GM12878 (cell line): ENCODE measurements at regions of chr5 and their contacts with region 1.

Region 1: DNA sequence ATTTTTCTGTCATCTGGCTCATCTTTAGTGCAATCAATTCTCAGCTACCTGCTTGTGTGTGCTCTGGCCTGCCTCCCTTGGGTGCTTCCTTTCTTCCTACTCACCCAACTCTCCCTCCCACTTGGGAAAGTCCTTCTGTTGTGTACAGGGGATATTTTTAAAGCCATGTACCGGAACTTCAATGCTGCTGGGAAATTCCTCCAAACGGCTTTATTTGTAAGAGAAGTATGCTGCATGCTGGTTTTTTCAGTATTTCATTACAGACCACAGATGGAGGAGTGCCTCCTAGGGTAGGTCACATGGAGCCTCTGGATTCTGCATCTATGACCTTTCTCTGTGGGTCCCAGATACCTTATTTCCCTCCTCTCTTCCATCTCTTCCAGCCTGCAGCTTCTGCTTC is 5.4 kb upstream of the HMHB1 start:
- DNase-seq: peak; percentile 60
- ATAC-seq: peak; percentile 90
- H3K4me3 ChIP-seq: peak overlapping the region; percentile 66
- H3K27ac ChIP-seq: peak overlapping the region; percentile 34; the same call in 1 of the 2 replicates
- H3K4me1 ChIP-seq: peaks cover 3% of the 10 kb centered on the region; the same call in 1 of the 2 replicates
- H3K27me3 ChIP-seq: no peaks in the 10 kb centered on the region
- CTCF ChIP-seq: no peak
- EP300 ChIP-seq: peak in 1 of 2 experiments; percentile 42; a peak in 1 of 4 replicates
- POLR2A ChIP-seq: no peak
- RAD21 ChIP-seq: peak; percentile 25; the same call in 1 of the 2 replicates

Region 2: DNA sequence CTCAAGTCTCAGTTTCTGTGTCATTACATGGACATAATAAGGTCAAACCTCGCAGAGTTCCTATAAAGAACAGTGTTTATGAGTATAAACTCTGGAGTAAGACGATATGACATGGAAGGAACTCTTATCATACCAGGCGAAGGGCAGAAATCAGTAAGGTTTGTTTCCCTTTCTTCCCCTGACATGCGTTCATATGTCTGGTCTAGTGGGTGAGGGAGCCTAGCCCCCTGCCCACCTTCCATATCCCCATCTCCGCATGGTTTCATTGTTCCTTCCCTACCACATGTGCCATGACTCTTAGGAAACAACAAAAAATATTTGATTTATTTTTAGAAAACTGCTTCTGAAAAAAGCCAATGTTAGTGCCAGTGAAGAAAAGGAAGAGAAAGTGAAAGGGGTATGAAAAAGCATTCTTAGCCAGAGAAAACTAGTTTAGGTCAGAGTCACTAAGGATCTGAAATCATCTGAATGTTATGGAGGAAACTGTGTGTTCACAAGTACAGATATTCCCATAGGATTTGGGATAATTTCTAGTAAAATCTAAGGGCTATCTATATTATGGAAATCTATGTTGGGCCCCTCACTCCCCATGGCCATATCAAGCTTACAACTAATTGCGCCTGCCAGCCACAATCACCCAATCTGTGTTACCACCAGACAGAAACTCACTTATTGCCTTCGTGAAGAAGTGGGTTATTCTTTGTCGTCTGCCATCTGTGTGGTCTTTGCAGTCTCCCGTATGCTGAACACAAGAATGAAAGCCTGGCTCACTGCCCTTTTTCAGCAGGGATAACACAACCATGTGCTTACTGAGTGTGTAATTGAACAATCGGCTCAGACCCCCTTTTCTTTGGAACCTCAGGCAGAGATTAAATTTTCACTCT is 14.5 kb before region 1 on chr5:
- CTCF ChIA-PET with region 1: interaction called, 11 read pairs
- POLR2A ChIA-PET with region 1: interaction called, 4 read pairs
- RAD21 ChIA-PET with region 1: interaction called, 6 read pairs
- SMC1A ChIA-PET with region 1: interaction called, 13 read pairs
- in situ Hi-C with region 1: no loop called
- intact Hi-C with region 1: no loop called
- DNase-seq: no peak
- ATAC-seq: peak; percentile 84
- H3K4me3 ChIP-seq: no peak overlapping the region
- H3K27ac ChIP-seq: peak overlapping the region; percentile 62
- H3K4me1 ChIP-seq: no peaks in the 10 kb centered on the region; the same call in 1 of the 2 replicates
- H3K27me3 ChIP-seq: no peaks in the 10 kb centered on the region
- CTCF ChIP-seq: no peak
- EP300 ChIP-seq: no peak
- POLR2A ChIP-seq: no peak
- RAD21 ChIP-seq: no peak

Region 3: GRCh38 chr5:143860213-143860612 is 53.6 kb after region 1 on chr5:
- CTCF ChIA-PET with region 1: no interaction called
- POLR2A ChIA-PET with region 1: no interaction called
- RAD21 ChIA-PET with region 1: no interaction called
- SMC1A ChIA-PET with region 1: no interaction called
- in situ Hi-C with region 1: no loop called
- intact Hi-C with region 1: no loop called
- DNase-seq: no peak
- ATAC-seq: peak; percentile 33; the same call in 1 of the 3 replicates
- H3K4me3 ChIP-seq: no peak overlapping the region
- H3K27ac ChIP-seq: no peak overlapping the region
- H3K4me1 ChIP-seq: no peaks in the 10 kb centered on the region
- H3K27me3 ChIP-seq: no peaks in the 10 kb centered on the region
- CTCF ChIP-seq: peak in 1 of 3 experiments; percentile 28; a peak in 1 of 6 replicates
- EP300 ChIP-seq: no peak
- POLR2A ChIP-seq: no peak
- RAD21 ChIP-seq: no peak

Region 4: DNA sequence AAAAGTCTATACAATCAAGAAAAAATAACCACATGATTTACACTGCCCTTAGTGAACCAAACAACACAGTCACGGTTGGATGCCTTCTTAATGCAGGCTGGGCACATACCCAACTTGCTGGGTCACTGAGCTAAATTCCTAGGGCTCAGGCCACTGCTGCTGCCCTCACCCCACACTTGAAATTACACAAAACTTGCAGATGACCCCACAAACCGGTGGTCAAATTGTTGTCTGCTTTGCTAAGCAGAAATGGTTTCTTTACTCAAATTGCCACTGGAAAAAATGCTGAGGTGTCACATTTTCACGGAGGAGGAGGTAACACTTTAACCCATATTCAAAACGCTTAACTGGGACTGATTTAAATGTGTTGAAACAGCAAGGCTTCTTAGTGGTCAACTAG is 67.7 kb after region 1 on chr5:
- CTCF ChIA-PET with region 1: no interaction called
- POLR2A ChIA-PET with region 1: no interaction called
- RAD21 ChIA-PET with region 1: no interaction called
- SMC1A ChIA-PET with region 1: no interaction called
- in situ Hi-C with region 1: no loop called
- intact Hi-C with region 1: no loop called
- DNase-seq: no peak
- ATAC-seq: peak; percentile 79
- H3K4me3 ChIP-seq: no peak overlapping the region
- H3K27ac ChIP-seq: no peak overlapping the region
- H3K4me1 ChIP-seq: no peaks in the 10 kb centered on the region
- H3K27me3 ChIP-seq: no peaks in the 10 kb centered on the region
- CTCF ChIP-seq: no peak
- EP300 ChIP-seq: no peak
- POLR2A ChIP-seq: no peak
- RAD21 ChIP-seq: no peak

Region 5: GRCh38 chr5:143896966-143897365 is 90.4 kb after region 1 on chr5:
- CTCF ChIA-PET with region 1: no interaction called
- POLR2A ChIA-PET with region 1: no interaction called
- RAD21 ChIA-PET with region 1: no interaction called
- SMC1A ChIA-PET with region 1: no interaction called
- in situ Hi-C with region 1: no loop called
- intact Hi-C with region 1: no loop called
- DNase-seq: no peak
- ATAC-seq: no peak
- H3K4me3 ChIP-seq: no peak overlapping the region
- H3K27ac ChIP-seq: no peak overlapping the region
- H3K4me1 ChIP-seq: no peaks in the 10 kb centered on the region
- H3K27me3 ChIP-seq: no peaks in the 10 kb centered on the region
- CTCF ChIP-seq: no peak
- EP300 ChIP-seq: no peak
- POLR2A ChIP-seq: no peak
- RAD21 ChIP-seq: no peak